ENCODE measurements at regions of chr22 and their contacts with region 1.

Region 1: GRCh38 chr22:25048659-25049647 is 96.4 kb downstream of the KIAA1671 start:
- DNase-seq: peak; percentile 66
- H3K4me3 ChIP-seq: no peak overlapping the region
- H3K27ac ChIP-seq: no peak overlapping the region
- H3K4me1 ChIP-seq: peaks cover 23% of the 10 kb centered on the region
- H3K27me3 ChIP-seq: no peaks in the 10 kb centered on the region
- CTCF ChIP-seq: peak; percentile 92

Region 2: DNA sequence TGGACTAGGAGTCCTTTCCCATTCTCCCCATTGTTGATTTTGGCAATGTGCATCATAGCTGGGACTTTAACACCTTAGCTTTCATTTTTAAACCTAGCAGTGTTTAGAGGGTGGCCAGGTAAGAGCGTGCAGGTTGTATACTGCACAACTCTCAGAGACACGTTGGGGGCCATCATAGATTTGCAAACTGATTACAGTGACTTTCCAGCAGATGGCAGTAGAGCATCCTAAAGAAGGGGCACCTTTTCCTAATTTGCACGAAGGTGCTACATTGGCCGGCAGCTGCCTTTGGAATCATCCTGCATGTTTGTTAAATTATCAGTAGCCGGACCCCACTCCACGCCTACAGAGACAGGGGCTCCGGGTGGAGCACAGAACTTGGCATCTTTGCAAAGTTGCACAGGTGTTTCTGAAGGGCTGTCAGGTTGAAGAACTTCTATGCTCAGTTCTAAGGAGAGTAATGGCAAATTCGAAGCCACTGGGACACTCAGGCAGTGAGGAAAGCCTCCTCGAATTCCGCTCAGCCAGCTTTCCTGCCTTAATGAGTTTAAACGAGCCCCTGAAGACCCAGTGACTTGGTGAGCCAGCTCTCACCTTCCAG is 110.1 kb before region 1 on chr22:
- intact Hi-C with region 1: loop called (anchors 5 kb)
- DNase-seq: no peak
- H3K4me3 ChIP-seq: no peak overlapping the region
- H3K27ac ChIP-seq: no peak overlapping the region
- H3K4me1 ChIP-seq: no peaks in the 10 kb centered on the region
- H3K27me3 ChIP-seq: no peaks in the 10 kb centered on the region
- CTCF ChIP-seq: peak; percentile 82

Region 3: DNA sequence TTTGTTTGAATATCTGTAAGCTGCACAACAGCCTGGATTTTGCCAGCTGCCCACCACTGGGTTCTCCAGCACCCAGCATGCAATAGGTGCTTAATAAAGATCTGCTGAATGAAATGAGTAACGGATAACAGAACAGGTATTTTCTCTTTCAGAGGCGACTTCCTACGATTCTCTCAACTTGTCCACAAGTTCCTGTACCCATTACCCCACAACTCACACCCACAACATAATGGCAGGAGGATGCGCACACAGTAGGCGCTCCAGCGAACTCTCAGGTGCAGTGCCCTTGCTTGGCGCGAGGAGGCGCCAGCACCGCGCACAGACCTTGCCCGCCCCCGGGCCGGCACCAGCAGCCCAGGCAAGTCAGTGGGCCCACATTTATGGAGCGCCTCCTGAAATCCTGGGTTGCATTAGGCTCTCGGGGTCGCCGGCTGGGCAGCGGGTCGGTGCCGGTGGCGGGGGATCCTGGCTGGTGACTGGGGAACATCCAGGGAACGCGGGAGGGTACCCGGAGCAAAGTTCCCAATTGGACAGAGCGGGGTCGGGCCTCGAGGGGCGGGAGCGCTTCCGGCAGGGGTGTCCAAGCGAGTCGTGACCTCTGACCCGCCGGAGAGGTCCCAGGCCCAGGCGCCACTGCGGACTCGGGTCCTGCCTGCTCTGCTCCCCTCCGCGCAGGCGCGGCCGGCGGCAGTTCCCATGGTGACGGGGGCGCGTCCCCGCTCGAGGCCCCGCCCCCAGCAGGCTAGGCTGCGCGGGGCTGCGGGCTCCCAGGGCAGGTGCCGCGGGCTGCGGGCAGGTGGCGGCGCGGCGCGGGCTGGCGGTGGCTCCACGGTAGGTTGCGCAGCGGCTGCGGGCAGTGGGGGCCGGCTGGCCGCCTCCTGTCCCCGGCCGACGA is 96.8 kb before region 1 on chr22 and contains the start of gene KIAA1671:
- intact Hi-C with region 1: loop called (anchors 2 kb)
- DNase-seq: peak; percentile 85
- H3K4me3 ChIP-seq: peak within 1 kb of the TSS; percentile 77
- H3K27ac ChIP-seq: peak within 1 kb of the TSS; percentile 88
- H3K4me1 ChIP-seq: peaks cover 36% of the 10 kb centered on the region
- H3K27me3 ChIP-seq: peaks cover 10% of the 10 kb centered on the region
- CTCF ChIP-seq: peak; percentile 99
- total RNA-seq, gene KIAA1671: 12.2 TPM

Region 4: GRCh38 chr22:24996420-24996952 is 52.5 kb before region 1 on chr22:
- intact Hi-C with region 1: no loop called
- DNase-seq: no peak
- H3K4me3 ChIP-seq: no peak overlapping the region
- H3K27ac ChIP-seq: peak overlapping the region; percentile 50
- H3K4me1 ChIP-seq: peaks cover 40% of the 10 kb centered on the region
- H3K27me3 ChIP-seq: no peaks in the 10 kb centered on the region
- CTCF ChIP-seq: no peak

Region 5: GRCh38 chr22:25120761-25121212 is 71.8 kb after region 1 on chr22:
- intact Hi-C with region 1: no loop called
- DNase-seq: no peak
- H3K4me3 ChIP-seq: no peak overlapping the region
- H3K27ac ChIP-seq: peak overlapping the region; percentile 87
- H3K4me1 ChIP-seq: peaks cover 18% of the 10 kb centered on the region
- H3K27me3 ChIP-seq: no peaks in the 10 kb centered on the region
- CTCF ChIP-seq: no peak

Region 6: GRCh38 chr22:25219948-25220442 is 171.0 kb after region 1 on chr22:
- intact Hi-C with region 1: no loop called
- DNase-seq: no peak
- H3K4me3 ChIP-seq: no peak overlapping the region
- H3K27ac ChIP-seq: no peak overlapping the region
- H3K4me1 ChIP-seq: no peaks in the 10 kb centered on the region
- H3K27me3 ChIP-seq: peaks cover 59% of the 10 kb centered on the region
- CTCF ChIP-seq: no peak

Region 7: GRCh38 chr22:25395915-25396314 is 347.0 kb after region 1 on chr22:
- intact Hi-C with region 1: no loop called
- DNase-seq: no peak
- H3K4me3 ChIP-seq: no peak overlapping the region
- H3K27ac ChIP-seq: peak overlapping the region; percentile 62
- H3K4me1 ChIP-seq: peaks cover 49% of the 10 kb centered on the region
- H3K27me3 ChIP-seq: no peaks in the 10 kb centered on the region
- CTCF ChIP-seq: no peak

Measured in left ventricle myocardium inferior (tissue), 1 donor.